ENCODE measurements at regions of chr19 and their contacts with region 1.

Region 1: GRCh38 chr19:55632463-55632834 is 8.1 kb upstream of the ZNF784 start:
- DNase-seq: peak; percentile 72 to 95 (median 89)
- ATAC-seq: peak; percentile 46
- H3K4me3 ChIP-seq: no peak overlapping the region
- H3K4me3 Mint-ChIP-seq: peak overlapping the region; percentile 23
- H3K27ac ChIP-seq: no peak overlapping the region
- H3K27ac Mint-ChIP-seq: peak overlapping the region; percentile 63
- H3K4me1 ChIP-seq: peaks cover 31% of the 10 kb centered on the region
- H3K4me1 Mint-ChIP-seq: peaks cover 40% of the 10 kb centered on the region
- H3K27me3 ChIP-seq: no peaks in the 10 kb centered on the region
- H3K27me3 Mint-ChIP-seq: no peaks in the 10 kb centered on the region
- CTCF ChIP-seq: peak; percentile 45

Region 2: DNA sequence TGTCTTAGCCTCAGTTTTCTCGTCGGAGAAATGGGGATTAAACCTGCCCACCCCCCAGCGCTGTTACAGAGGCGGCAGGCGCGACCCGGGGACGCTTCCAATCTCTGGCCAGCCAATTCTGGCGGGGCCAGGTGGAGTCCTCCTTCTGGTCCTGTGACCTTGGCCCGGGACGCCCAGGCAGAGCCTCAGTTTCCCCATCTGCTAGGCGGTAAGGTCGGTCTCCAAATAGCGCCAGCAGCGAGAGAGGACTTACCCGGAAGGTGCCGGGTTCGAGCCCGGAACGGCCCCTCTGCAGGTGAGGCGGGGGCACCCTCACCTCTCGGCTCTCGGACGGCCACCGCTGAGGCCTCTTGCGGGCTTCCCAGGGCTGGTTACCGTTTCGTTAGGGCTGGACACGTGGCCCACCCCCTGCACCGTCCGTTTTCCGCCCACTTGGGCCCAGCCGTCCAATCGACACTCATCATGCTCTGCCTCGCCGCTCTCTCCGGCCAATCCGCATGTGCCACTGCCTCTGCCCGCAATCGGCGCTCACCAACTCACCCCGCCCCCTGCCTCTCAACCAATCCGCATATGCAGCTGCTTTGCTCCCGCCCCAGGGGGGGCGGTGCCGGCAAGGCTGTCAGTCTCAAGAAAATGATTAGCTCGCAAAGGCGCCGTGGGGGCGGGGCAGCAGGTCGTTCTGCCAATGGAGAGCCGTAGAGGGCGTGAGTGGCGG is 171.0 kb before region 1 on chr19 and contains the start of gene ISOC2:
- CTCF ChIA-PET with region 1: interaction called, 34 read pairs
- POLR2A ChIA-PET with region 1: no interaction called
- intact Hi-C with region 1: loop called in 1 of 2 experiments (anchors 5 kb)
- DNase-seq: peak; percentile 100
- ATAC-seq: peak; percentile 96
- H3K4me3 ChIP-seq: peak within 1 kb of the TSS; percentile 90 to 95
- H3K4me3 Mint-ChIP-seq: peak within 1 kb of the TSS; percentile 83
- H3K27ac ChIP-seq: peak within 1 kb of the TSS; percentile 70 to 87
- H3K27ac Mint-ChIP-seq: peak within 1 kb of the TSS; percentile 58
- H3K4me1 ChIP-seq: peaks cover 17% of the 10 kb centered on the region
- H3K4me1 Mint-ChIP-seq: peaks cover 19% of the 10 kb centered on the region
- H3K27me3 ChIP-seq: no peaks in the 10 kb centered on the region
- H3K27me3 Mint-ChIP-seq: no peaks in the 10 kb centered on the region
- CTCF ChIP-seq: no peak
- total RNA-seq, gene ISOC2: 1.5 to 2.1 TPM

Region 3: DNA sequence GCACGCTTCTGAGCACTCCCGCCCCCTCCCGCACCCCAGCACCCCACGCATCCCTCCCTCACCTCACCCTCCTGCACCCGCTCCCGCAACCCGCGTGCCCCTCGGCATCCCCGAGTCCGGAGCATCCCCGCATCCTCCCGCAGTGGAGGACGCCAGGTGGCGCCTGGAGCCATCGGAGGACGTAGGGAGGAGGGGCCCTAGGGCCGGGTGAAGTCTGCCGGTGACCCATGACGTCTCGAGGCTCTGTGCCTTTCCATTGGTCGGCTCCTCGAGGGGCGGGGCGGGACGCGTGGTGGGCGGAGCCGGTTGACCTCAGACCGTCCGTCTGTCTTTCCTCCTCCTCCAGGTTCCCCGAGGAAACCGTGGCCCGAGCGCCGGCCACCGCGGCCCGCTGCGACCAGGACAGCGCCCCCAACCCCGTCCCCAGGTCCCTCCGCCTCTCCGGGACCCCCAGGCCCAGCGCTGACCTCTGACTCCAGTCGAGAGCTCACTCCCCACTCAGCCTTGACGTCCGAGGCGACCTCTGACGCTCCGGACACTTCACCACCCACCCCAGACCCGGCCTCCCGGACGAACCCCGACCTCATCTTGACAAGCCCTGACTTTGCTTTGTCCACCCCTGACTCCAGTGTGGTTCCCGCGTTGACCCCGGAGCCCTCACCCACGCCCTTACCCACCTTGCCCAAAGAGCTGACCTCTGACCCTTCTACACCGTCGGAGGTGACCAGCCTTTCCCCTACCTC is 115.4 kb before region 1 on chr19:
- CTCF ChIA-PET with region 1: interaction called, 121 read pairs
- POLR2A ChIA-PET with region 1: no interaction called
- intact Hi-C with region 1: loop called (anchors 1 kb)
- DNase-seq: peak; percentile 77 to 95 (median 90)
- ATAC-seq: peak; percentile 100
- H3K4me3 ChIP-seq: peak overlapping the region; percentile 12 to 60
- H3K4me3 Mint-ChIP-seq: peak overlapping the region; percentile 79
- H3K27ac ChIP-seq: peak overlapping the region; percentile 40 to 74
- H3K27ac Mint-ChIP-seq: peak overlapping the region; percentile 61
- H3K4me1 ChIP-seq: peaks cover 5% of the 10 kb centered on the region
- H3K4me1 Mint-ChIP-seq: peaks cover 3% of the 10 kb centered on the region
- H3K27me3 ChIP-seq: no peaks in the 10 kb centered on the region
- H3K27me3 Mint-ChIP-seq: peaks cover 2% of the 10 kb centered on the region
- CTCF ChIP-seq: peak; percentile 76

Region 4: GRCh38 chr19:55599468-55600279 is 32.8 kb before region 1 on chr19 and contains the start of gene FIZ1:
- CTCF ChIA-PET with region 1: interaction called, 11 read pairs
- POLR2A ChIA-PET with region 1: interaction called, 18 read pairs
- intact Hi-C with region 1: loop called (anchors 2 kb)
- DNase-seq: peak; percentile 90 to 98 (median 95)
- ATAC-seq: peak; percentile 69
- H3K4me3 ChIP-seq: peak within 1 kb of the TSS; percentile 80 to 81
- H3K4me3 Mint-ChIP-seq: peak within 1 kb of the TSS; percentile 100
- H3K27ac ChIP-seq: peak within 1 kb of the TSS; percentile 75 to 95
- H3K27ac Mint-ChIP-seq: peak within 1 kb of the TSS; percentile 99
- H3K4me1 ChIP-seq: peaks cover 14% of the 10 kb centered on the region
- H3K4me1 Mint-ChIP-seq: peaks cover 29% of the 10 kb centered on the region
- H3K27me3 ChIP-seq: no peaks in the 10 kb centered on the region
- H3K27me3 Mint-ChIP-seq: no peaks in the 10 kb centered on the region
- CTCF ChIP-seq: no peak
- total RNA-seq, gene FIZ1: 6.7 to 8.4 TPM

Region 5: GRCh38 chr19:55653758-55654539 is 21.5 kb after region 1 on chr19:
- CTCF ChIA-PET with region 1: interaction called, 32 read pairs
- POLR2A ChIA-PET with region 1: interaction called, 8 read pairs
- intact Hi-C with region 1: loop called (anchors 1 kb)
- DNase-seq: peak; percentile 98 to 100 (median 99)
- ATAC-seq: peak; percentile 77
- H3K4me3 ChIP-seq: peak overlapping the region; percentile 72 to 89
- H3K4me3 Mint-ChIP-seq: peak overlapping the region; percentile 95
- H3K27ac ChIP-seq: peak overlapping the region; percentile 79 to 100
- H3K27ac Mint-ChIP-seq: peak overlapping the region; percentile 97
- H3K4me1 ChIP-seq: peaks cover 38% of the 10 kb centered on the region
- H3K4me1 Mint-ChIP-seq: peaks cover 44% of the 10 kb centered on the region
- H3K27me3 ChIP-seq: peaks cover 0 to 5% of the 10 kb centered on the region in 2 experiments
- H3K27me3 Mint-ChIP-seq: no peaks in the 10 kb centered on the region
- CTCF ChIP-seq: peak; percentile 100

Region 6: DNA sequence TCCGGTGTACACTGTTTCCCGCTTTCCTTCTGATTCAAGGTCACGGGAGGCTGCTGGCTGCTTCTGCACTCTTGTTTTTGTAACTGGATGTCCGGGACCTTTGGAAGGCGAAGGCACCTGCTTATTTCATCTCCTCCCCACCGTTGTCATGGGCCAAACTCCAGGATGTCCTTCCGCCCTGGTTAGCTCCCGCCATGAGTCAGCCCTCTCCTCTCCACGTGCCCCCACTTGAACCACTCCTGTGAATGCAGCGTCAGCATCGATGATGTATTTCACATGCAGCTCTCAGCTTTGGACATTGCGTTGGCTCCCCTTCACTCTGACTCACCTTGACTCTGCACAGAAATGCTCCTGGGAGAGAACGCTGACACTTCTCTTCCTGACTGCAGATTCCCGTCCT is 537.8 kb after region 1 on chr19:
- CTCF ChIA-PET with region 1: no interaction called
- POLR2A ChIA-PET with region 1: no interaction called
- intact Hi-C with region 1: loop called in 1 of 2 experiments (anchors 5 kb)
- DNase-seq: no peak
- ATAC-seq: no peak
- H3K4me3 ChIP-seq: no peak overlapping the region
- H3K4me3 Mint-ChIP-seq: no peak overlapping the region
- H3K27ac ChIP-seq: no peak overlapping the region
- H3K27ac Mint-ChIP-seq: no peak overlapping the region
- H3K4me1 ChIP-seq: no peaks in the 10 kb centered on the region
- H3K4me1 Mint-ChIP-seq: peaks cover 2% of the 10 kb centered on the region
- H3K27me3 ChIP-seq: no peaks in the 10 kb centered on the region
- H3K27me3 Mint-ChIP-seq: peaks cover 8% of the 10 kb centered on the region
- CTCF ChIP-seq: no peak